ENCODE measurements at regions of chr17 and their contacts with region 1.

Region 1: GRCh38 chr17:1716076-1716995 is 6.2 kb upstream of the TLCD2 start:
- DNase-seq: peak; percentile 100
- H3K4me3 ChIP-seq: peak overlapping the region; percentile 60
- H3K27ac ChIP-seq: peak overlapping the region; percentile 99
- H3K4me1 ChIP-seq: peaks cover 28% of the 10 kb centered on the region
- H3K27me3 ChIP-seq: no peaks in the 10 kb centered on the region
- CTCF ChIP-seq: no peak; the same call in 1 of the 2 replicates

Region 2: GRCh38 chr17:773467-774312 is 942.6 kb before region 1 on chr17:
- CTCF ChIA-PET with region 1: no interaction called
- POLR2A ChIA-PET with region 1: interaction called, 13 read pairs
- intact Hi-C with region 1: no loop called
- DNase-seq: peak; percentile 82
- H3K4me3 ChIP-seq: no peak overlapping the region
- H3K27ac ChIP-seq: peak overlapping the region; percentile 61
- H3K4me1 ChIP-seq: peaks cover 18% of the 10 kb centered on the region
- H3K27me3 ChIP-seq: no peaks in the 10 kb centered on the region
- CTCF ChIP-seq: no peak

Region 3: GRCh38 chr17:1484676-1485421 is 231.5 kb before region 1 on chr17:
- CTCF ChIA-PET with region 1: no interaction called
- POLR2A ChIA-PET with region 1: no interaction called
- intact Hi-C with region 1: no loop called
- DNase-seq: peak; percentile 83
- H3K4me3 ChIP-seq: peak overlapping the region; percentile 79
- H3K27ac ChIP-seq: peak overlapping the region; percentile 83
- H3K4me1 ChIP-seq: peaks cover 12% of the 10 kb centered on the region
- H3K27me3 ChIP-seq: no peaks in the 10 kb centered on the region
- CTCF ChIP-seq: no peak

Region 4: GRCh38 chr17:1865252-1866037 is 149.1 kb after region 1 on chr17:
- CTCF ChIA-PET with region 1: interaction called, 6 read pairs
- POLR2A ChIA-PET with region 1: no interaction called
- intact Hi-C with region 1: loop called (anchors 10 kb)
- DNase-seq: peak; percentile 54
- H3K4me3 ChIP-seq: no peak overlapping the region
- H3K27ac ChIP-seq: no peak overlapping the region
- H3K4me1 ChIP-seq: no peaks in the 10 kb centered on the region
- H3K27me3 ChIP-seq: no peaks in the 10 kb centered on the region
- CTCF ChIP-seq: peak; percentile 74

Region 5: DNA sequence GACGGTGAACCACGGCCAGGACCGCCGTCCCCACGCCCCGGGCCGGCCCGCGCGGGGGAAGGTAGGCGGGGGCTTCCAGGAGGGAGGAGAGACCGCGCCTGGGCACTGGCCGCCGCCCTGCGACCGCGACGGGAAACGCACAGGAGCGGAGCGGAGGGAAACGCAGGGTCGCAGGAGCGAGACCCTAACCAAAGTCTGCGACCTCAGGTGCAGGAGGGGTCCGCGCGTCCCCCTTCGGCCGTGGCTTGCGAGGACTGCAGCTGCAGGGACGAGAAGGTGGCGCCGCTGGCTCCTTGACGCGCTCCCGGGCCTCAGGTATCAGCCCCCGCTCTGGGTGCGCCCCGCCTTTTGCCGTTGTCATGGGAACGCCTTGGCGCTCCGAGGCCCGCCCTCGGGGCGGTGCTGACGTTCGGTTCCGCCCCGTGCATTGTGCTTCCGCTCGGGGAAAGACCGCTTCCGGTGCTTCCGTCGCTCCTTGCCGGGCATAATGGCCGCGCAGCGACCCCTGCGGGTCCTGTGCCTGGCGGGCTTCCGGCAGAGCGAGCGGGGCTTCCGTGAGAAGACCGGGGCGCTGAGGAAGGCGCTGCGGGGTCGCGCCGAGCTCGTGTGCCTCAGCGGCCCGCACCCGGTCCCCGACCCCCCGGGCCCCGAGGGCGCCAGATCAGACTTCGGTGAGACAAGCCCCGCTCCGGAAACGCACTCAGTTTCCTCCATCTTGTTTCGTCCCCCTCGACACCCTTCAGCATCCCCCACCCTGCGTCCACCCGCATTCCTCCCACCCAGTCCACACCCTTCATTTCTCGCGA is 325.4 kb after region 1 on chr17 and contains the start of gene OVCA2:
- CTCF ChIA-PET with region 1: no interaction called
- POLR2A ChIA-PET with region 1: interaction called, 3 read pairs
- intact Hi-C with region 1: loop called (anchors 5 kb)
- DNase-seq: peak; percentile 97
- H3K4me3 ChIP-seq: peak within 1 kb of the TSS; percentile 73
- H3K27ac ChIP-seq: peak within 1 kb of the TSS; percentile 91
- H3K4me1 ChIP-seq: peaks cover 13% of the 10 kb centered on the region
- H3K27me3 ChIP-seq: no peaks in the 10 kb centered on the region
- CTCF ChIP-seq: peak; percentile 60
- total RNA-seq, gene OVCA2: 30.7 and 33.1 TPM in 2 replicates